Endothelial cell of umbilical vein (primary cell): ENCODE measurements at regions of chr2 and their contacts with region 1.

Region 1: DNA sequence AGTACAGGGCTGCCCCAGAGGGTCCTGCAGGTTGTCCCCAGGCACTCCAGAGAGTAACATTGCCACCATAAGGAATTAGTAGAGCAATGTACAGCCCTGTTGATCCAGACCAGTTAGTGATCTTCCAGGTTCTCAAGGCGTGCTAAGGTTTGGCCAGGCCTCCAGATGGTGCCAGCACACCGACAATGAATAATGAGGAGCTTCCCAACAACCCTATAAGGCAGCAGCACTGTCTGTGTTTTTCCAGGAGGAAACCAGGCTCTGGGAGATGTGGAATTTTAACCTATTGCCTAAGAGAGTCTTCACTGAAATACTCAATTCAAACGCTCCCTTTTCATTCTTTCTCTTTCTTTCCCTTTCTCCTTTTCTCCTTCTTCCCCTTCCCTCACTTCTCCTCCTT is 122.1 kb downstream of the MGAT5 start:
- DNase-seq: peak; percentile 64
- H3K4me3 ChIP-seq: no peak overlapping the region
- H3K27ac ChIP-seq: no peak overlapping the region
- H3K4me1 ChIP-seq: peaks cover 6% of the 10 kb centered on the region
- H3K27me3 ChIP-seq: no peaks in the 10 kb centered on the region
- CTCF ChIP-seq: peak; percentile 30 to 46
- POLR2A ChIP-seq: no peak

Region 2: DNA sequence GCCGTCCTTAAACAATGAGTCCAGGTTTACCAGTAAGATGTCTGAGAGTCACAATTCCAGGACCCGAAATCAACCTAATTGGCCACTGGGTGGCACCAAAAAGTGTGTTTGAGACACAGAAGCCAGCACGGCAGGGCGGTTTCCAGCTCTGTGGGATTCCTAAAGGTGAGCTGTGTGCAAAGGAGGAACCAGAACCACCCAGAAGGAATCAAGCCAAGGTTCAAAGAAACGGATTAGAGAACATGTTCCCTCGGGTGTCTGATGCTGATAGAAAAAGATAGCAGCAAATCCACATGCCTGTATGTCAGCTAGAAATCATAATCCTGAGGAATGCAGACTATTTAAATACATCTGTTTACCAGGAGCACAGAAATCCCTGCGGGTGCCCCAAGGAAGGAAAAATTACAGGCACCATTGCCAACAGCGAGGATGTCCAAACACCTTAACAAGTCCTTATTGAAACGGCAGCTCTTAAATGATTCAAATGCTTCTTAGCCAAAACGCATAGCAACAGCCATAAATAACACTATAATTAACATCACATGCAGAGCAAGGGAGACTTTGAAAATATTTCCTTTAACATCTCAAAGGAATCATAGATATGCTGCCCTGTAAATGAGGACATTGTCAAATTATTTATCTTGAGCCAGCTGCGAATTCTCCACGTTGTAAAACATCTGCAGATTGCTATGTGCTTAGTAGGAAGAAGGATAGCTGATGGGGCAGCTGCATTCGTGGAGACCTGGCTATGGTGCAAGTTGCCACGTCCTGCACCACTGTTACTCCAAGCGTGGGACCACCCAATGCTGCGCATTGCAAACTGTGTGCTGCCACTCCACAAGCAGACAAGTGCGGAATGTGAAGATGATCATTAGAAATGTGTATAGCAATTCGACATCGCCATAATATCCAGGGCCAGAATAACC is 488.9 kb before region 1 on chr2:
- CTCF ChIA-PET with region 1: interaction called, 11 read pairs
- POLR2A ChIA-PET with region 1: no interaction called
- dilution Hi-C with region 1: no loop called
- intact Hi-C with region 1: no loop called
- DNase-seq: peak; percentile 61
- H3K4me3 ChIP-seq: no peak overlapping the region
- H3K27ac ChIP-seq: no peak overlapping the region
- H3K4me1 ChIP-seq: peaks cover 6% of the 10 kb centered on the region
- H3K27me3 ChIP-seq: peaks cover 0 to 26% of the 10 kb centered on the region in 2 experiments
- CTCF ChIP-seq: peak; percentile 60 to 65
- POLR2A ChIP-seq: no peak

Region 3: GRCh38 chr2:134127496-134127895 is 248.4 kb before region 1 on chr2:
- CTCF ChIA-PET with region 1: no interaction called
- POLR2A ChIA-PET with region 1: no interaction called
- dilution Hi-C with region 1: no loop called
- intact Hi-C with region 1: no loop called
- DNase-seq: no peak
- H3K4me3 ChIP-seq: no peak overlapping the region
- H3K27ac ChIP-seq: no peak overlapping the region
- H3K4me1 ChIP-seq: peaks cover 10% of the 10 kb centered on the region
- H3K27me3 ChIP-seq: no peaks in the 10 kb centered on the region
- CTCF ChIP-seq: no peak
- POLR2A ChIP-seq: no peak

Region 4: GRCh38 chr2:134460583-134460998 is 84.7 kb after region 1 on chr2:
- CTCF ChIA-PET with region 1: interaction called, 234 read pairs
- POLR2A ChIA-PET with region 1: no interaction called
- dilution Hi-C with region 1: no loop called
- intact Hi-C with region 1: no loop called
- DNase-seq: peak; percentile 52
- H3K4me3 ChIP-seq: no peak overlapping the region
- H3K27ac ChIP-seq: no peak overlapping the region
- H3K4me1 ChIP-seq: peaks cover 5% of the 10 kb centered on the region
- H3K27me3 ChIP-seq: no peaks in the 10 kb centered on the region
- CTCF ChIP-seq: peak; percentile 50 to 86
- POLR2A ChIP-seq: no peak

Region 5: GRCh38 chr2:135132314-135132713 is 756.4 kb after region 1 on chr2:
- CTCF ChIA-PET with region 1: no interaction called
- POLR2A ChIA-PET with region 1: no interaction called
- dilution Hi-C with region 1: no loop called
- intact Hi-C with region 1: no loop called
- DNase-seq: no peak
- H3K4me3 ChIP-seq: no peak overlapping the region
- H3K27ac ChIP-seq: no peak overlapping the region
- H3K4me1 ChIP-seq: no peaks in the 10 kb centered on the region
- H3K27me3 ChIP-seq: no peaks in the 10 kb centered on the region
- CTCF ChIP-seq: no peak
- POLR2A ChIP-seq: no peak